ENCODE measurements at regions of chr2 and their contacts with region 1.

Region 1: GRCh38 chr2:74876081-74876886 is 42.4 kb downstream of the HK2 start:
- DNase-seq: peak; percentile 46
- H3K4me3 Mint-ChIP-seq: no peak overlapping the region
- H3K27ac Mint-ChIP-seq: peak overlapping the region; percentile 28
- H3K4me1 Mint-ChIP-seq: peaks cover 4% of the 10 kb centered on the region
- H3K27me3 Mint-ChIP-seq: no peaks in the 10 kb centered on the region

Region 2: GRCh38 chr2:74593826-74594772 is 282.2 kb before region 1 on chr2:
- CTCF ChIA-PET with region 1: no interaction called
- POLR2A ChIA-PET with region 1: no interaction called
- DNase-seq: no peak
- H3K4me3 Mint-ChIP-seq: no peak overlapping the region
- H3K27ac Mint-ChIP-seq: no peak overlapping the region
- H3K4me1 Mint-ChIP-seq: no peaks in the 10 kb centered on the region
- H3K27me3 Mint-ChIP-seq: peaks cover 32% of the 10 kb centered on the region

Region 3: GRCh38 chr2:74690571-74690970 is 185.7 kb before region 1 on chr2:
- CTCF ChIA-PET with region 1: interaction called, 27 read pairs
- POLR2A ChIA-PET with region 1: no interaction called
- DNase-seq: no peak
- H3K4me3 Mint-ChIP-seq: no peak overlapping the region
- H3K27ac Mint-ChIP-seq: no peak overlapping the region
- H3K4me1 Mint-ChIP-seq: no peaks in the 10 kb centered on the region
- H3K27me3 Mint-ChIP-seq: peaks cover 12% of the 10 kb centered on the region

Region 4: GRCh38 chr2:74715078-74715791 is 161.0 kb before region 1 on chr2:
- CTCF ChIA-PET with region 1: interaction called, 104 read pairs
- POLR2A ChIA-PET with region 1: interaction called, 4 read pairs
- DNase-seq: peak; percentile 81
- H3K4me3 Mint-ChIP-seq: peak overlapping the region; percentile 74
- H3K27ac Mint-ChIP-seq: no peak overlapping the region
- H3K4me1 Mint-ChIP-seq: peaks cover 8% of the 10 kb centered on the region
- H3K27me3 Mint-ChIP-seq: peaks cover 13% of the 10 kb centered on the region

Region 5: GRCh38 chr2:74833418-74834233 is 42.7 kb before region 1 on chr2 and contains the start of gene HK2:
- CTCF ChIA-PET with region 1: interaction called, 51 read pairs
- POLR2A ChIA-PET with region 1: interaction called, 3 read pairs
- DNase-seq: peak; percentile 88
- H3K4me3 Mint-ChIP-seq: peak within 1 kb of the TSS; percentile 96
- H3K27ac Mint-ChIP-seq: peak within 1 kb of the TSS; percentile 88
- H3K4me1 Mint-ChIP-seq: peaks cover 48% of the 10 kb centered on the region
- H3K27me3 Mint-ChIP-seq: peaks cover 6% of the 10 kb centered on the region
- total RNA-seq, gene HK2: 36.8 to 37.8 TPM

Region 6: GRCh38 chr2:74845217-74846011 is 30.9 kb before region 1 on chr2:
- CTCF ChIA-PET with region 1: interaction called, 13 read pairs
- POLR2A ChIA-PET with region 1: interaction called, 3 read pairs
- DNase-seq: peak; percentile 55
- H3K4me3 Mint-ChIP-seq: peak overlapping the region; percentile 28
- H3K27ac Mint-ChIP-seq: peak overlapping the region; percentile 81
- H3K4me1 Mint-ChIP-seq: peaks cover 96% of the 10 kb centered on the region
- H3K27me3 Mint-ChIP-seq: no peaks in the 10 kb centered on the region

Region 7: GRCh38 chr2:75087736-75088135 is 211.5 kb after region 1 on chr2:
- CTCF ChIA-PET with region 1: no interaction called
- POLR2A ChIA-PET with region 1: no interaction called
- DNase-seq: no peak
- H3K4me3 Mint-ChIP-seq: no peak overlapping the region
- H3K27ac Mint-ChIP-seq: no peak overlapping the region
- H3K4me1 Mint-ChIP-seq: no peaks in the 10 kb centered on the region
- H3K27me3 Mint-ChIP-seq: no peaks in the 10 kb centered on the region

Measured in activated CD4-positive, alpha-beta memory T cell treated with anti-CD3 and anti-CD28 coated beads, Interleukin-2, amount 10 ng/mL, durations not matched to agents 7 days and 5 days (primary cell).